IMR-90 (cell line): ENCODE measurements at regions of chr4 and their contacts with region 1.

Region 1: DNA sequence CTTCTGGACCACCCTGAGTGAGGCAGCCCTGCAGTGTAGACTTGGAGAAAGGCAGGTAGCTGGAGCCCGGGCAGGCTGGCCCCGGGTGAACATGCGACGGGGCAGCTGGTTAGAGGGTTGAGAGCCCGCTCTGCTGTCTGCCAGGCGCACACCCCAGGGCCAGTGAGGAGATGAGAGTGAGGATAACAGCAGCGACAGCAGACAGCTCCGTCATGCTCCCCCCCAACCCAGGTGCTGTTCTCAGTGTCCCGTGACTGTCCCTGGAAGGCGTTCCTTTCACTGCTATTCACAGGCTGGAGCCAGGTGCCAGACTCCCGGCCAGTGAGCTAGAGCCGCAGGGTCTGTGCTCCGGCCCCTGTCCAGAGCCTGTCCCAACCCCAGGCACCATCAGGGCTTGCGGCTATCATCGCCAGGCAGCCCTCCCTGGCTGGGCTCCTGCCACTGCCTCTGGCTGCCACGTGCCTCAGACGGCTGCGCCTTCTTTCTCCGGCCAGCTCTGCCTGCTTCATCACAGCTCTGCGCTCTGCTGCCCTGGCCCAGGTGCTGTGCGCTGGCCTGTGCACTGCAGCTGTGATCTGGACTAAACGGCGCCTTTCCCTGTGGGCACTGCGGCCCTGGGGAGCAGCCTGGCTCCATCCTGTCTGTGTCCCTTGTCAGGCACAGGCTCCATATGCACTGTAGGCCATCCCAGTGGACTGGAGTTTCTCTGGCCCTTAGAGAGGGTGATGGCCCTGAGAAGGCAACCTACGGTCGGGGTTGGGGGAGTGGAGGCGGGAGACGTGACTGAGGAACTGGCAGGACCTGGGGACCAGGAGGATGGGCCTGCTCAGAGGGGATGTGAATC is 19.8 kb downstream of the NSG1 start:
- DNase-seq: no peak
- ATAC-seq: no peak
- H3K4me3 ChIP-seq: no peak overlapping the region
- H3K27ac ChIP-seq: no peak overlapping the region
- H3K4me1 ChIP-seq: no peaks in the 10 kb centered on the region
- H3K27me3 ChIP-seq: peaks cover 10% of the 10 kb centered on the region; the same call in 1 of the 2 replicates
- CTCF ChIP-seq: no peak
- POLR2A ChIP-seq: no peak
- RAD21 ChIP-seq: no peak

Region 2: GRCh38 chr4:2910409-2910808 is 1496.3 kb before region 1 on chr4:
- CTCF ChIA-PET with region 1: no interaction called
- POLR2A ChIA-PET with region 1: no interaction called
- dilution Hi-C with region 1: no loop called
- in situ Hi-C with region 1: no loop called
- intact Hi-C with region 1: no loop called
- DNase-seq: no peak
- ATAC-seq: no peak
- H3K4me3 ChIP-seq: no peak overlapping the region
- H3K27ac ChIP-seq: no peak overlapping the region
- H3K4me1 ChIP-seq: no peaks in the 10 kb centered on the region
- H3K27me3 ChIP-seq: no peaks in the 10 kb centered on the region
- CTCF ChIP-seq: 0 out of 2 replicates have a peak, but pooled peaks have one; percentile 3
- POLR2A ChIP-seq: no peak
- RAD21 ChIP-seq: no peak

Region 3: DNA sequence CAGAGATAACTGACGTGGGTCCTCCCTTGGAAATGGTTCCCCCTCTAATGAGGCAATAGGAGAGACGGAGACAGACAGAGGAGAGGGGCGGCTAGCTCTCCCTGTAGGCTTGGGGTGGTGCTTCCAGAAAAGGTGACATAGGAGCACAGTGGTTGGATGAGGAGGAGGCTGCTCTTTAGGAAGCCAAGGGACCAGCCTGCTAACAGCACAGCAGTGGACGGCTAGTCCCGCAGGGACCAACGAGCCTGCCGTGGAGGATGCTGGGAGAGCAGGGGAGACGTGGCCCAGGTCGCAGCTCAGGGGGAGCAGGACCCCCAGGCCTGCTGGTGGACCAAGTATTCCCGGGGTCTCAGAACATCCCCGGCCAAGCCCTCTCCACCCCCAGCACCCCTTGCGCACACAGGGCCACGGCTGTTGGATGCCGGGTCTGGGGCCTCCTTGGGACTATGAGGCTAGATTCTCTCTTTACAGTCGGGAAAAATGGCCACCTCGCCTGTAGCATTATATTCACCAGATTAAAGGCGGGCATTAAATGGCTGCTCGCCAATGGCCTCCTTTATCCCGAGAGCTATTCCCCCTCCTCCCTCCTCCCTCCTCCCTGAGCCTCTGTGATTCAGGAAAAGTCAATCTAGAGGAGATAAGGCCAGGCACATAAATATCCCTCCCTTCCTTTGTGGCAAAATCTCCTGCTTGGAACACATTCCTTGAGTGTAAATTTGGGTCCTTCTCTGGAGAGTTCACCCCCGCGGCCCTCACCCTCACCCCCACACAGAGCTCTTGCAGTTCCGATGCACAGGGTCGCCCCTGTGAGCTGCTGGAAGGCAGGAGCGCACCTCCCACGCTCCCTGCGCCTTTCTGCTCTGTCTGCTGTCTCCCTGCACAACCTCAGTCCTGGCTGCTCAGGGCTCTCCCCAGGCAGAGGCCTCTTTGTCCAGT is 50.3 kb before region 1 on chr4:
- CTCF ChIA-PET with region 1: no interaction called
- POLR2A ChIA-PET with region 1: no interaction called
- dilution Hi-C with region 1: no loop called
- in situ Hi-C with region 1: no loop called
- intact Hi-C with region 1: no loop called
- DNase-seq: no peak
- ATAC-seq: 0 out of 2 replicates have a peak, but pooled peaks have one; percentile 14
- H3K4me3 ChIP-seq: no peak overlapping the region
- H3K27ac ChIP-seq: no peak overlapping the region
- H3K4me1 ChIP-seq: no peaks in the 10 kb centered on the region
- H3K27me3 ChIP-seq: peaks cover 43% of the 10 kb centered on the region
- CTCF ChIP-seq: no peak
- POLR2A ChIP-seq: no peak
- RAD21 ChIP-seq: no peak

Region 4: GRCh38 chr4:4423706-4424498 is 17.2 kb after region 1 on chr4:
- CTCF ChIA-PET with region 1: interaction called, 3 read pairs
- POLR2A ChIA-PET with region 1: interaction called, 12 read pairs
- dilution Hi-C with region 1: no loop called
- in situ Hi-C with region 1: no loop called
- intact Hi-C with region 1: no loop called
- DNase-seq: no peak
- ATAC-seq: no peak
- H3K4me3 ChIP-seq: no peak overlapping the region
- H3K27ac ChIP-seq: no peak overlapping the region
- H3K4me1 ChIP-seq: peaks cover 4% of the 10 kb centered on the region; the same call in 1 of the 2 replicates
- H3K27me3 ChIP-seq: no peaks in the 10 kb centered on the region
- CTCF ChIP-seq: no peak
- POLR2A ChIP-seq: no peak
- RAD21 ChIP-seq: no peak